T-cell (primary cell): ENCODE measurements at regions of chr1 and their contacts with region 1.

Region 1: DNA sequence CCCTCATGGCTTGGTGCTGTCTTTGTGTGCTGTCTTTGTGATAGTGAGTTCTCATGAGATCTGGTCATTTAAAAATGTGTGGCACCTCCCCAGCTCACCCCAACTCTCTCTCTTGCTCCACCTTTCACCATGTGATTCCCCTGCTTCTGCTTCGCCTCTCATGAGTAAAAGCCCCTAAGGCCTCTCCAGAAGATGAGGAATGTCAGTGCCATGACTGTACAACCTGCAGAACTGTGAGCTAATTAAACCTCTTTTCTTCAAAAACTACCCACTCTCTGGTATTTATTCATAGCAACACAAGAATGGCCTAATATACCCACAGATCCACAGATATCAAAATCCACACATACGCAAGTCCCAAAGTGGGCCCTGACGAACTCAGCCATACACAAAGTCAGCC is 88.9 kb upstream of the PPP2R5A start:
- DNase-seq: no peak
- ATAC-seq: no peak
- H3K4me3 ChIP-seq: no peak overlapping the region
- H3K4me3 Mint-ChIP-seq: no peak overlapping the region
- H3K27ac ChIP-seq: no peak overlapping the region
- H3K27ac Mint-ChIP-seq: no peak overlapping the region
- H3K4me1 ChIP-seq: no peaks in the 10 kb centered on the region
- H3K4me1 Mint-ChIP-seq: peaks cover 0 to 5% (median 5%) of the 10 kb centered on the region in 3 donors
- H3K27me3 ChIP-seq: no peaks in the 10 kb centered on the region
- H3K27me3 Mint-ChIP-seq: no peaks in the 10 kb centered on the region

Region 2: DNA sequence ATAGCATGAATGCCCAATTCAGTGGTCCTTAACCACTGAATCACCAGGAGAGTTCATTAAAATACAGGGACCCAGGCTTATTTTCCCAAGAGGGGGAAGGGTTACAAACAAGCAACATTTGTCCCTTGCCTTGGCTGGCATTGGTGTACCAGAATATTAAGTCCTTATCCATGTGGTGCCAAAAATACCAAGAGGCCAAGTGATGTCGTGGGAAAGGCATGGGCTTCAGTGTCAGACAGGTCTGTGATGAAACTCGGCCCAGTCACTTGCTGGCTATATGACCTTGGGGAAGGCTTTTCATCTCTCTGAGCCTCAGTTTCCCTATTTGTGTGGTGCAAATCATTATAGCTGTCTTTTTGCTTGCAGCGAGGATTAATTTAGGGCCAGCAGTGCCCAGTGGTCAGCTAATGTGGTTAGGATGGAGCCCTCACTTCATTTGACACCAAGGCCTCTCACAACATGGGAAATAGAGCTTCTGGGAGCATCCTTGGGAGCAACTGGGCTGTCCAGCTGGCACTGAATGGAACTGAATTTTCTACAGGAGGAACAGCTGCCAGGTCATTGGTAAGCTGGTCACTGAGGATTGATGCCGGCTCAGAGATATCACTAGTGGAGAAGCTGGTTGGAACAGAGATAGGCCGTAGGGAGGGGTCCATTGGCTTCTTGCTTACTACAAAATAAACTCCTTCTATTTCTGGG is 11.6 kb after region 1 on chr1:
- CTCF ChIA-PET with region 1: interaction called in 1 of 2 experiments, 13 read pairs
- POLR2A ChIA-PET with region 1: no interaction called
- DNase-seq: no peak
- ATAC-seq: no peak
- H3K4me3 ChIP-seq: no peak overlapping the region
- H3K4me3 Mint-ChIP-seq: no peak overlapping the region
- H3K27ac ChIP-seq: no peak overlapping the region
- H3K27ac Mint-ChIP-seq: no peak overlapping the region
- H3K4me1 ChIP-seq: no peaks in the 10 kb centered on the region
- H3K4me1 Mint-ChIP-seq: peaks cover 0 to 2% (median 0%) of the 10 kb centered on the region in 3 donors
- H3K27me3 ChIP-seq: no peaks in the 10 kb centered on the region
- H3K27me3 Mint-ChIP-seq: no peaks in the 10 kb centered on the region

Region 3: DNA sequence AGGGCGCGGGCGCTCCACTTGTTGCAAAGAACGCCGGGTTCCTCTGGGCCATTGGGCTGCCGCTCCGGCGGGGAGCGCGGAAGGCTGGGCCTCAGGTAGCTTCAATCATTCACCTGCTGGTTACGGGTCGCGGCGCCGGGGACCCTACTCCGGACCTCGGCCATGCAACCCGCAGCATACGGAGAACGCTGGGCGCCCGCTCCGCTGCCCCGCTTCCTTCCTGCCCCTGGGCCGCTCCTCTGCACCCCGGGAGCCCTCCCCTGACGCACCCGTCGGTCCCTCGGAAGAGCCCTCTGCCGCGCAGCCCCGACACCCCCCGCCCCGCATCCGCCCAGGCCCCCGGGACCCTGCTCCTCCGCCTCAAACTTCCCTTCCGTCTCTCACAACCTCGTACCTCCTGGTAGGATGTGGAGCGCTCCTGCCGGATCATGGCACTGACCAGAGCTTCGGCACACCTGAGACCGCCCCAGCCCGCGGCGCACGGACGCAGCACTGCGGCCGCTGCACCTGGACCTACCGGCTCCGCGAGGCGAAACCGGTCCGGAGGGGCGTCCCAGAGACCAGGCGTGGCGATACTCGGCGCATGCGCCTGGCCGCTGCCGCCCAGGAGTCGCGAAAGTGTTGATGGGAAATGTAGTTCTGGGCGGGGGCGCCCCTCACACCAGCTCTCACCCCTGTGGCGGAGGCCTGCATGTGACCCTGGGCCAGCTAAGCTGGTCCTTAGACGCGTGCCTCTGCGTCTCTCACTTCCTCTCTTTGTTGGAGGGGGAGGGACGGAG is 218.2 kb after region 1 on chr1 and contains the start of gene PACC1:
- CTCF ChIA-PET with region 1: no interaction called
- POLR2A ChIA-PET with region 1: no interaction called
- DNase-seq: peak; percentile 72 to 93 (median 82)
- ATAC-seq: peak; percentile 85 to 92 (median 89)
- H3K4me3 ChIP-seq: peak within 1 kb of the TSS; percentile 77 to 90
- H3K4me3 Mint-ChIP-seq: peak within 1 kb of the TSS; percentile 99
- H3K27ac ChIP-seq: peak within 1 kb of the TSS; percentile 45
- H3K27ac Mint-ChIP-seq: peak within 1 kb of the TSS; percentile 89 to 93
- H3K4me1 ChIP-seq: peaks cover 0 to 31% of the 10 kb centered on the region in 2 experiments
- H3K4me1 Mint-ChIP-seq: peaks cover 31 to 44% (median 40%) of the 10 kb centered on the region in 3 donors
- H3K27me3 ChIP-seq: no peaks in the 10 kb centered on the region
- H3K27me3 Mint-ChIP-seq: no peaks in the 10 kb centered on the region
- total RNA-seq, gene PACC1: 5.5 to 16.4 (median 11.1) TPM